ENCODE measurements at regions of chr6 and their contacts with region 1.

Region 1: GRCh38 chr6:26312501-26313390 is 52.3 kb upstream of the BTN3A2 start:
- DNase-seq: peak; percentile 84
- ATAC-seq: peak; percentile 75
- H3K4me3 ChIP-seq: peak overlapping the region; percentile 28 to 34
- H3K27ac ChIP-seq: peak overlapping the region; percentile 44
- H3K4me1 ChIP-seq: peaks cover 23 to 62% of the 10 kb centered on the region in 2 experiments
- H3K27me3 ChIP-seq: no peaks in the 10 kb centered on the region
- CTCF ChIP-seq: no peak
- POLR2A ChIP-seq: no peak
- RAD21 ChIP-seq: no peak

Region 2: GRCh38 chr6:25652007-25652515 is 660.7 kb before region 1 on chr6 and contains the start of gene SCGN:
- CTCF ChIA-PET with region 1: no interaction called
- POLR2A ChIA-PET with region 1: no interaction called
- RAD21 ChIA-PET with region 1: no interaction called
- intact Hi-C with region 1: no loop called
- DNase-seq: no peak
- ATAC-seq: no peak
- H3K4me3 ChIP-seq: no peak within 1 kb of the TSS
- H3K27ac ChIP-seq: no peak within 1 kb of the TSS
- H3K4me1 ChIP-seq: no peaks in the 10 kb centered on the region
- H3K27me3 ChIP-seq: peaks cover 63% of the 10 kb centered on the region
- CTCF ChIP-seq: no peak
- POLR2A ChIP-seq: no peak
- RAD21 ChIP-seq: no peak
- total RNA-seq, gene SCGN: not detected

Region 3: GRCh38 chr6:26156076-26156849 is 156.5 kb before region 1 on chr6:
- CTCF ChIA-PET with region 1: no interaction called
- POLR2A ChIA-PET with region 1: no interaction called
- RAD21 ChIA-PET with region 1: no interaction called
- intact Hi-C with region 1: no loop called
- DNase-seq: peak; percentile 73
- ATAC-seq: peak; percentile 60
- H3K4me3 ChIP-seq: peak overlapping the region; percentile 69 to 75
- H3K27ac ChIP-seq: peak overlapping the region; percentile 88
- H3K4me1 ChIP-seq: peaks cover 20 to 71% of the 10 kb centered on the region in 2 experiments
- H3K27me3 ChIP-seq: no peaks in the 10 kb centered on the region
- CTCF ChIP-seq: no peak
- POLR2A ChIP-seq: peak; percentile 98
- RAD21 ChIP-seq: peak; percentile 16; the same call in 1 of the 2 replicates

Region 4: GRCh38 chr6:26175428-26176181 is 137.1 kb before region 1 on chr6:
- CTCF ChIA-PET with region 1: no interaction called
- POLR2A ChIA-PET with region 1: interaction called, 3 read pairs
- RAD21 ChIA-PET with region 1: no interaction called
- intact Hi-C with region 1: loop called (anchors 5 kb)
- DNase-seq: no peak
- ATAC-seq: no peak
- H3K4me3 ChIP-seq: no peak overlapping the region
- H3K27ac ChIP-seq: peak overlapping the region; percentile 46; the same call in 1 of the 2 replicates
- H3K4me1 ChIP-seq: peaks cover 11 to 28% of the 10 kb centered on the region in 2 experiments
- H3K27me3 ChIP-seq: no peaks in the 10 kb centered on the region
- CTCF ChIP-seq: peak; percentile 62 to 75 (median 73)
- POLR2A ChIP-seq: no peak
- RAD21 ChIP-seq: peak; percentile 83

Region 5: DNA sequence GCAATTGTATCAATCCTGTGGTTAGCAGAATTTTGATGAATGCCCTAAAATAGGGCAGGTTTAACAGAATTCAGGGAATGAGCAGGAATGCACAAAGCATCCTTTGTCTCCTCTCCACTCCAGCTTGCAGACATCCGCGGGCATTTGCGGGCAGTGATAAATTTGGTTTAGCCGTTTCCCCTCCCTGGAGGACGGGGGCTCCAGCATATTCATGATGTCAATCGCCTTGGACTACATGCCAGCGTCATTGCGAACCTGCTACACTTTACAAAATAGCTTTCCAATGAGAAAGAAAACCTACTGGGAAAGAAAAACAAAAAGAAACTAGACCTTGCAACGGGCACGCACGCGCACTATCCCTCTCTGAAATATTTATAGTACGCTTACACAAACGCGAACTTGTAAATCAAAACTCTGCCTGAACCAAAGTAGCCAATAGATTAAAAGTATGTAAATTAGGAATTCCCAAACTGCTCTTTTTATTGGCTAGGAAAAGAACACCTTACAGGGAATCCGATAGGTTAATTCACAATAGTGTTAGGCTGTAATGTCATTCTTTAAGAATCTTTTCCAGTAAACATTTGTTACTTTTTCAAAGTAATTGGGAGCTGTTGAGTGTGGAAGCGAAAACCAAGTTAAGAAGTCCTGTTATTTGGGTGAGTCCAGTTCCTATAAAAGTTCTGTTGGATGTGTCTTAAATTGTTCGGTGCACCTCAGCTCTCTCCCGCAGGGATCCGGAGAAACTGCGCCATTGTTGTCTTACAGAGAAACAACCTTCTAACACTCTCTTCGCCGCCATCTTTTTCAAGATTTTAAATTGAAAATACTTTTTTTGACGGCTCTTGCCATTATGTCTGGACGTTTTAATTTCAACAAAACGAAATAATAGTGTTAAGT is 88.8 kb before region 1 on chr6:
- CTCF ChIA-PET with region 1: no interaction called
- POLR2A ChIA-PET with region 1: no interaction called
- RAD21 ChIA-PET with region 1: no interaction called
- intact Hi-C with region 1: loop called (anchors 2 kb)
- DNase-seq: peak; percentile 91
- ATAC-seq: peak; percentile 92
- H3K4me3 ChIP-seq: peak overlapping the region; percentile 59 to 71
- H3K27ac ChIP-seq: peak overlapping the region; percentile 90
- H3K4me1 ChIP-seq: peaks cover 11 to 29% of the 10 kb centered on the region in 2 experiments; a peak in 3 of 4 replicates
- H3K27me3 ChIP-seq: no peaks in the 10 kb centered on the region
- CTCF ChIP-seq: no peak
- POLR2A ChIP-seq: peak; percentile 30
- RAD21 ChIP-seq: no peak

Region 6: GRCh38 chr6:26537846-26538571 is 225.3 kb after region 1 on chr6 and contains the start of gene HMGN4:
- CTCF ChIA-PET with region 1: no interaction called
- POLR2A ChIA-PET with region 1: no interaction called
- RAD21 ChIA-PET with region 1: no interaction called
- intact Hi-C with region 1: loop called (anchors 5 kb)
- DNase-seq: peak; percentile 81
- ATAC-seq: peak; percentile 73
- H3K4me3 ChIP-seq: peak within 1 kb of the TSS; percentile 74 to 89
- H3K27ac ChIP-seq: peak within 1 kb of the TSS; percentile 72
- H3K4me1 ChIP-seq: peaks cover 14 to 51% of the 10 kb centered on the region in 2 experiments
- H3K27me3 ChIP-seq: no peaks in the 10 kb centered on the region
- CTCF ChIP-seq: no peak
- POLR2A ChIP-seq: no peak
- RAD21 ChIP-seq: 0 out of 2 replicates have a peak, but pooled peaks have one; percentile 17
- total RNA-seq, gene HMGN4: 73.8 TPM

Region 7: GRCh38 chr6:27161946-27162603 is 849.3 kb after region 1 on chr6:
- CTCF ChIA-PET with region 1: no interaction called
- POLR2A ChIA-PET with region 1: no interaction called
- RAD21 ChIA-PET with region 1: no interaction called
- intact Hi-C with region 1: no loop called
- DNase-seq: peak; percentile 62
- ATAC-seq: peak; percentile 39
- H3K4me3 ChIP-seq: no peak overlapping the region
- H3K27ac ChIP-seq: peak overlapping the region; percentile 7; the same call in 1 of the 2 replicates
- H3K4me1 ChIP-seq: peaks cover 0 to 20% of the 10 kb centered on the region in 2 experiments; a peak in 3 of 4 replicates
- H3K27me3 ChIP-seq: no peaks in the 10 kb centered on the region
- CTCF ChIP-seq: peak; percentile 40 to 88 (median 77); a peak in 5 of 6 replicates
- POLR2A ChIP-seq: no peak
- RAD21 ChIP-seq: peak; percentile 81

Region 8: DNA sequence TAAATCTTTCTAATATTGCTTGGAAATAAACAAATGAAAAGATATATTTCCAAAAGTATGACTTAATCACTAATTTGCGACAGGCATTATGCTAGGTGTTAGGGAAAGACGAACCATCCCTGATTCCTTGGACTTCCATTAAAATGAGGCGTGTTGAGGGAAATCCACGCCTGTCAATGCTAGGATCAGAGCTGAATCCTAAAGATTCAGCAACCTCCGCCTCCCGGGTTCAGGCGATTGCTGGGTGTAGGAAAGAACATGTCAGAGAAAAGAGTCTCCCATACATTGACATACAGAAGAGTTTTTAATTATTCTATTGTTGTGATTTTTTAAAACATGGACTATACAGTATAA is 918.0 kb after region 1 on chr6:
- CTCF ChIA-PET with region 1: no interaction called
- POLR2A ChIA-PET with region 1: no interaction called
- RAD21 ChIA-PET with region 1: no interaction called
- intact Hi-C with region 1: loop called (anchors 5 kb)
- DNase-seq: peak; percentile 46
- ATAC-seq: peak; percentile 55
- H3K4me3 ChIP-seq: peak overlapping the region; percentile 34 to 54
- H3K27ac ChIP-seq: peak overlapping the region; percentile 43; the same call in 1 of the 2 replicates
- H3K4me1 ChIP-seq: peaks cover 7 to 28% of the 10 kb centered on the region in 2 experiments; a peak in 3 of 4 replicates
- H3K27me3 ChIP-seq: no peaks in the 10 kb centered on the region
- CTCF ChIP-seq: no peak
- POLR2A ChIP-seq: no peak
- RAD21 ChIP-seq: no peak